Common myeloid progenitor, CD34-positive (primary cell): ENCODE measurements at regions of chr15 and their contacts with region 1.

Region 1: GRCh38 chr15:81410318-81410753 is 36.3 kb upstream of the TMC3 start:
- DNase-seq: peak; percentile 81 to 92 (median 89)
- H3K4me3 ChIP-seq: peak overlapping the region in 1 of 7 experiments; percentile 56
- H3K27ac ChIP-seq: no peak overlapping the region
- H3K4me1 ChIP-seq: peaks cover 4 to 24% (median 20%) of the 10 kb centered on the region in 4 experiments
- H3K27me3 ChIP-seq: no peaks in the 10 kb centered on the region

Region 2: DNA sequence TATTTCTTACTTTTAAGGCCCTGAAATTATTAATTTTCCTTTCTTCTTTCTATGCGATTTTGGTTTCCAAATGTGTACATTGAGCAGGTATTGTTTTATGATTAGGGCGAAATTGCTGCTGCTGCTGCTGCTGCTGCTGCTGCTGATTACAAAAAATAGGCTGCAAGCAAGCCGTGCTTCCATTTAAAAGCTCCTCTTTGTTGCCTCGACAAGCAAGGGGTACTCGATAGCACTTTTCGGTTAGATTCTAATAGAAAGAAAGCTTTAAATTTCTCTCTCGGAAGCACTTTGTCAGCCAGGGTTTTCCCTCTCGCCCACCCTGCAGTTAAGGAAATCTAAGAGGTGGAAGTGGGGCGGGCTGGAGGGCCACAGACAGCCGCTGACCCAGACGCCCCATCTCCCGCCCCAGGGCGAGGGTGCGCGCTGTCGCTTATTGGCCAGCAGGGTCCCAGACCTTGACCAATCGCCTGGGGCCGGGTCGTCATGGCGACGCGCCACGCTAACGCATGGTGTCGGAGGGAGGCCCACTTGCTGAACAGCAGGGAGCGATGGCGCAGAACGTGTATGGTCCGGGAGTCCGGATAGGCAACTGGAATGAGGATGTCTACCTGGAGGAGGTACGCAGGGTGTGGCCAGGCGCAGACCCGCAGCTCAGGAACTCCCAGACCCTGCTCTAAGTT is 276.4 kb before region 1 on chr15 and contains the start of gene CFAP161:
- CTCF ChIA-PET with region 1: no interaction called
- POLR2A ChIA-PET with region 1: no interaction called
- DNase-seq: peak; percentile 63 to 74 (median 70)
- H3K4me3 ChIP-seq: peak within 1 kb of the TSS in 6 of 7 experiments; percentile 13 to 73 (median 55)
- H3K27ac ChIP-seq: no peak within 1 kb of the TSS
- H3K4me1 ChIP-seq: peaks cover 0 to 9% (median 7%) of the 10 kb centered on the region in 4 experiments
- H3K27me3 ChIP-seq: peaks cover 3 to 14% (median 5%) of the 10 kb centered on the region in 5 experiments

Region 3: DNA sequence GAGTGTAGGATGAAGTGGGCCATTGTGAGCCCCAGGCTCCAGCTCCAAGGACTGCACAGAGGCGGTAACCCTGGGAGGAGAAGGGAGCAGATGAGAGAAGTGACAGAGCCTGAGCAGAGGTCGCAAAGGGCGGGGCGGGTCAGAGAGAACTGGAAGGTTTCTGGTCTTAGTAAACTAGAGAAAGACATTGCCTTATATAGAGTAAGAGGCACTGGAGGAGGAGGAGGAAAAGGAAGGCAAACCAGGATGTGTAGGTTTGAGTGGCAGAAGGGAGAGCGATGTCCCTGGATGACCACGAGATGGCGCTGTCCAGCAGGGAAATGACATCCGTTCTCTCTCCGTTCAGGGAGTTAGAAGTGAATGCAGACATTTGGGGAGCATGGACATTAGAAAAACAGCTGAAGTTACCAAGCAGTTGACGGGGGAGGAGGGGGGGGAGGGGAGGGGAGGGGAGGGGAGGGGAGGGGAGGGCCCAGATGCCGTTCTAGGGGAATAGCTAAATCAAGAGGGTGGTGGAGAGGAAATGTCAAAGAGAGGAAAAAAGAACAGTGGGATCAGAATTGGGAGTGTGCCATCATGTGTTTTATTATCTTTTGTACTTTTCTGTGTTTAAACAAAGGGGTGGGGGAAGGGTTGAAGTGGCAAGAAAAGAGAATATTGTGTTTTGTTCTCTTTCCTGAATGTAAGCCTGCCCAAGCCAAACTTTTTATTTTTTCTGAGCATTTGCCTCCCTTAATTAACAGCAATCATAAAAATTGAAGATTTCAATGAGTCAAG is 135.2 kb before region 1 on chr15:
- CTCF ChIA-PET with region 1: interaction called, 12 read pairs
- POLR2A ChIA-PET with region 1: no interaction called
- DNase-seq: peak; percentile 84 to 90 (median 88)
- H3K4me3 ChIP-seq: no peak overlapping the region
- H3K27ac ChIP-seq: no peak overlapping the region
- H3K4me1 ChIP-seq: peaks cover 2 to 7% (median 5%) of the 10 kb centered on the region in 4 experiments
- H3K27me3 ChIP-seq: no peaks in the 10 kb centered on the region

Region 4: GRCh38 chr15:81379269-81379668 is 31.1 kb before region 1 on chr15:
- CTCF ChIA-PET with region 1: no interaction called
- POLR2A ChIA-PET with region 1: no interaction called
- DNase-seq: no peak
- H3K4me3 ChIP-seq: no peak overlapping the region
- H3K27ac ChIP-seq: no peak overlapping the region
- H3K4me1 ChIP-seq: no peaks in the 10 kb centered on the region
- H3K27me3 ChIP-seq: no peaks in the 10 kb centered on the region

Region 5: DNA sequence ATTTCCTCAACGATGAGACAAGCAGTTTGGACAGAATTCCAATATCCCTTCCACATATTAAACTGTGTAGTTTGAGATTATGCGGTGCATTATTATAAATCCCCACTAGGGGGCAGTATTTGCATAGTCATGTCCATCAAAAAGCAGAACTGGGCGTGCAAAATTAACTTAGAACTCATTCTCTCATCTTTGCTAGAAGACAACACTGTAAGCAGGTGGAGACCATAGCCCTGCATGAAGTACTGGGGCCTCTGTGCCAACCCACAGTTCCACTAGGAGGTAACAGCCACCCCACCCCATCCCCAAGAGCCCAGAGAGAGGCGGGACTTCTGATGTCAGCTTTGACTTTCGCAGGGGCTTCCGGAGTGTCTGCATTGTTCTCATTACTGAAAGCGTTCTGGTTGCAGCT is 70.3 kb after region 1 on chr15:
- CTCF ChIA-PET with region 1: interaction called, 18 read pairs
- POLR2A ChIA-PET with region 1: no interaction called
- DNase-seq: peak; percentile 64 to 81 (median 72)
- H3K4me3 ChIP-seq: no peak overlapping the region
- H3K27ac ChIP-seq: no peak overlapping the region
- H3K4me1 ChIP-seq: peaks cover 0 to 3% (median 0%) of the 10 kb centered on the region in 4 experiments
- H3K27me3 ChIP-seq: no peaks in the 10 kb centered on the region

Region 6: GRCh38 chr15:81485806-81486205 is 75.5 kb after region 1 on chr15:
- CTCF ChIA-PET with region 1: interaction called, 18 read pairs
- POLR2A ChIA-PET with region 1: no interaction called
- DNase-seq: no peak
- H3K4me3 ChIP-seq: no peak overlapping the region
- H3K27ac ChIP-seq: no peak overlapping the region
- H3K4me1 ChIP-seq: peaks cover 0 to 1% (median 0%) of the 10 kb centered on the region in 4 experiments
- H3K27me3 ChIP-seq: no peaks in the 10 kb centered on the region

Region 7: GRCh38 chr15:82046666-82047452 is 636.5 kb after region 1 on chr15:
- CTCF ChIA-PET with region 1: interaction called, 16 read pairs
- POLR2A ChIA-PET with region 1: interaction called, 3 read pairs
- DNase-seq: peak; percentile 95 to 99 (median 98)
- H3K4me3 ChIP-seq: peak overlapping the region; percentile 80 to 96 (median 90)
- H3K27ac ChIP-seq: peak overlapping the region; percentile 81 to 89
- H3K4me1 ChIP-seq: peaks cover 0 to 29% (median 27%) of the 10 kb centered on the region in 4 experiments
- H3K27me3 ChIP-seq: peaks cover 0 to 3% (median 0%) of the 10 kb centered on the region in 5 experiments

Region 8: GRCh38 chr15:82103468-82103867 is 693.1 kb after region 1 on chr15:
- CTCF ChIA-PET with region 1: interaction called, 45 read pairs
- POLR2A ChIA-PET with region 1: no interaction called
- DNase-seq: peak; percentile 9 to 24 (median 21)
- H3K4me3 ChIP-seq: no peak overlapping the region
- H3K27ac ChIP-seq: no peak overlapping the region
- H3K4me1 ChIP-seq: no peaks in the 10 kb centered on the region
- H3K27me3 ChIP-seq: no peaks in the 10 kb centered on the region